Activated CD8-positive, alpha-beta memory T cell treated with anti-CD3 and anti-CD28 coated beads, Interleukin-2, amount 10 ng/mL, durations not matched to agents 7 days and 5 days (primary cell): ENCODE measurements at regions of chr14 and their contacts with region 1.

Region 1: DNA sequence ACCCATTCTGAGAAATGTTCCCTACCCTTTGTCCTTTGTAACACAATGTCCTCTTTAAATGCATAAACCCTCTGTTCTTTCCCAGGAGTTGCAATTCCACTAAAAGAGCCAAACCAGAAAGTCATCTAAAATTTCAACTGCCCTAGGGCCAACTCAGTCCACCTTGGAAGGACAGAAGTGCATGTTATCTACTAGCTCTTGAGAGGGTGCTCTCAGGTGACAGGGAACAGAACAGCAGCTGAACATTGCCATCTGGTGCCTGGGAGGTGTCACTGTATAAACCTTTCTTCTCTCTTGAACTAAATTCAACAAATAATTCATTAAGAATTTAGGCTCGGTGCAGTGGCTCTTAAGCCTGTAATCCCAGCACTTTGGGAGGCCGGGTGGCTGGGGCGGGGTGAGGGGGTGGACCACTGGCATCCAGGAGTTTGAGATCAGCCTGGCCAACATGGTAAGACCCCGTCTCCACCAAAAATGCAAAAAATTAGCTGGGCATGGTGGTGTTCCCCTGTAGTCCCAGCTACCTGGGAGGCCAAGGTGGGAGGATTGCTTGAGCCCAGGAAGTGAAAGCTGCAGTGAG is 10.3 kb upstream of the FERMT2 start:
- DNase-seq: peak; percentile 61
- ATAC-seq: peak; percentile 75
- H3K4me3 Mint-ChIP-seq: no peak overlapping the region
- H3K27ac Mint-ChIP-seq: no peak overlapping the region
- H3K4me1 Mint-ChIP-seq: peaks cover 5% of the 10 kb centered on the region
- H3K27me3 Mint-ChIP-seq: no peaks in the 10 kb centered on the region

Region 2: GRCh38 chr14:52824507-52824906 is 136.6 kb before region 1 on chr14:
- CTCF ChIA-PET with region 1: interaction called, 47 read pairs
- DNase-seq: no peak
- ATAC-seq: no peak
- H3K4me3 Mint-ChIP-seq: no peak overlapping the region
- H3K27ac Mint-ChIP-seq: no peak overlapping the region
- H3K4me1 Mint-ChIP-seq: peaks cover 6% of the 10 kb centered on the region
- H3K27me3 Mint-ChIP-seq: peaks cover 14% of the 10 kb centered on the region

Region 3: DNA sequence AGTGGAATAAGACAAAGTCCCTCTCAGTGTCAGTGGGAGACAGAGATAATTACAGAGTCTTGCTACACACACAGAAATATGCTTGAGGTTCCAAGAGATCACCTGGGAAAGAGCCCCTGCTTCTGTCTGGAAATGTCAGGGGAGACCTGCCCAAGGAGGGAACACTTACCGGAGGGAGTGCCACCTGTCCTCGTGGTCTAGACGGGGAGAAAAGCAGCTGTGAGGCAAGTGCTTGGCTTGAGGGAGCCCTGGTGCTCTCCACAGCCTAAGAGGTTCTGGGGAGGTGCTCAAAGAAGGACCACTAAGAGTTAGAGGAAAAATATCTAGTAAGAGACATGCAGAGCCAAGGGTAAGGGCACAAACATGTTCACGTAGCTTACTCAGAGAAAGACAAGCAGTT is 131.6 kb before region 1 on chr14:
- CTCF ChIA-PET with region 1: interaction called, 47 read pairs
- DNase-seq: no peak
- ATAC-seq: no peak
- H3K4me3 Mint-ChIP-seq: no peak overlapping the region
- H3K27ac Mint-ChIP-seq: no peak overlapping the region
- H3K4me1 Mint-ChIP-seq: peaks cover 4% of the 10 kb centered on the region
- H3K27me3 Mint-ChIP-seq: peaks cover 11% of the 10 kb centered on the region

Region 4: DNA sequence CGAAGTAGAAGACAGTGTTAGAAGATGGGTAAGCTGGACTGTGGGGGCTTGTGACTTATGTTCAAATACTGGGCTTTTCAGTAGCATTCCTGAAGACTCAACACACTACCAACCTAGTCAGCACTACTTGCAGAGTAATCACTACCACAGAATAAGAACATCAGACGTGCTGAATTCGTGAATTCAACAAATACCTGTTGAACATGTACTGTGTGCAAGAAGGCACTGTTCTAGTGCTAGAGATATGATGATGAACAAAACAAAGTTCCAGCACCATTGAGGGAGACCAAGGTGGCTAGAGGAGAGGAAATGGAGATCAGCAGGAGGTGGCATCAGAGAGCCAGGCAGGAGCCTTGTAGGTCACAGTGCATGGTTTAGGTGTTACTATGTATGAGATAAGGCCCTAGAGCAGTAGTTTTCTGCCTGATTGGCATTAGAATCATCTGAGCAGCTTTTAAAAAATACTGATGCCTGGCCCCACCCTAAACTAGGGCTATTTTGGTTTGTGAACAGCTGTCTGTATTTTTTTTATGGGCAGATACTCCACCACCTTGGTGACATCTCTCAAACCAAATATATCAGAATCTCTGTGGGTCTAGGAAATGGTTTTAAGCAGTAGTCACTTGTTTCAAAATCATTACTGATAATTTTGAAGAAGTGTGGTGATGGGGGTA is 37.1 kb before region 1 on chr14:
- CTCF ChIA-PET with region 1: interaction called, 12 read pairs
- DNase-seq: peak; percentile 48
- ATAC-seq: peak; percentile 65
- H3K4me3 Mint-ChIP-seq: no peak overlapping the region
- H3K27ac Mint-ChIP-seq: no peak overlapping the region
- H3K4me1 Mint-ChIP-seq: peaks cover 6% of the 10 kb centered on the region
- H3K27me3 Mint-ChIP-seq: no peaks in the 10 kb centered on the region

Region 5: GRCh38 chr14:52987514-52987913 is 26.4 kb after region 1 on chr14:
- CTCF ChIA-PET with region 1: no interaction called
- DNase-seq: no peak
- ATAC-seq: no peak
- H3K4me3 Mint-ChIP-seq: no peak overlapping the region
- H3K27ac Mint-ChIP-seq: no peak overlapping the region
- H3K4me1 Mint-ChIP-seq: no peaks in the 10 kb centered on the region
- H3K27me3 Mint-ChIP-seq: peaks cover 9% of the 10 kb centered on the region